ENCODE measurements at regions of chr2 and their contacts with region 1.

Region 1: DNA sequence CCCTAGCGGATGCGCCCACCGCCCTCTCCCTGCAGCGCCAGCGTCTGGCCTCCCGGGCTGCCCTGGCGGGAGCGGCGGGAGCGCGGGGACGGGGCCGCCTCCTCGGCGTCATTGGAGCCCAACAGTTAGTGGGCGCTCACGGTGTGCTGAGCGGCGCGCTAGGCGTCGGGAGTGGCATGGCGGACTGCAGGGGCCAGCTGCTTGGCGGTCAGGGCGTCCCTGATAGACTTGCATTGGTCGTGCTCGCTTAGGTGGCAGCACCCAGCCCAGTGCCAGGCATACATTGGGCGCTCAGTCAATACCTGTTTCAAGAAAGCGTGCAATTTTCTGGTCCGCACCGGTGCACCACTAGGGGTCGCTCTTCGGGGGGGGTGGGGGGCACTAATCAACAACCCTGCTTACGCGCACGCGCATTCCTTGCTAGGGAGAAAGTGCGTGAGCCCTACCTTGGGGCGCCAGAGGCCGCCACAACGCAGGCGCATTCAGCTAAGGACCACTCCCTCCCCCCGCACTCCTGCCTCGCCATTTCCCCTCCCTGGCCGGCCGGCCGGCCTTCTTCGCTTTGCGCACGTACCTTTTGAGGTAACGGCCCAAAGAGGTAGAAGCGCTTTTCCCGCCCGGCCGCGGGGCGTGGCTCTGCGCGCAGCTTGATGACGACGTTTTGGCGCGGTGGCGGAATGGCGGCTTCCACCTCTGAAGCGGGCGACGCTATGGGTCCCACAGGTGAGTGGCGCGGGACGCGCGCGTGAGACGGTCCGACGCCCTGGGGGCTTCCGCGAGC is 411 bp upstream of the MZT2A start:
- DNase-seq: peak; percentile 98
- ATAC-seq: peak; percentile 84
- H3K4me3 ChIP-seq: peak overlapping the region; percentile 90 to 98 (median 91)
- H3K27ac ChIP-seq: peak overlapping the region; percentile 83
- H3K4me1 ChIP-seq: peaks cover 50% of the 10 kb centered on the region
- H3K27me3 ChIP-seq: no peaks in the 10 kb centered on the region; a peak in 1 of 5 replicates
- CTCF ChIP-seq: peak; percentile 86
- EP300 ChIP-seq: peak in 1 of 2 experiments; percentile 36; a peak in 1 of 4 replicates
- POLR2A ChIP-seq: peak in 1 of 2 experiments; percentile 66; a peak in 3 of 4 replicates
- RAD21 ChIP-seq: peak; percentile 40

Region 2: DNA sequence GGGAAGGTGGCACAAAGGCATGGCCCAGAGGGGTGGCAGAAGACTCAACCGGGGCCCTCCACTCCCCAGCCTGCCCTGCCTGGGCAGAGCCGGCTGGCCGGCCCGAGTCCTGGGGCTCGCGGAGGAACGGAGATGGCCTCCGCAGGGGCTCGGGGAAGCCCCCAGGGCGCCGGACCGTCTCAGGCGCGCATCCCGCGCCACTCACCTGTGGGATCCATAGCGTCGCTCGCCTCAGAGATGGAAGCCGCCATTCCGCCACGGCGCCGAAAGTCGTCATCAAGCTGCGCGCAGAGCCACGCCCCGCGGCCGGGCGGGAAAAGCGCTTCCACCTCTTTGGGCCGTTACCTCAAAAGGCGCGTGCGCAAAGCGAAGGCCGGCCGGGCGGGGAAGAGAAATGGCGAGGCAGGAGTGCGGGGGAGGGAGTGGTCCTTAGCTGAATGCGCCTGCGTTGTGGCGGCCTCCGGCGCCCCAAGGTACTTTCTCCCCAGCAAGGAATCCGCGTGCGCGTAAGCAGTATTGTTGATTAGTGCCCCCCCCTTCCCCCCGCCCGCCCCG is 1311.2 kb before region 1 on chr2 and contains the start of gene SMPD4:
- CTCF ChIA-PET with region 1: no interaction called
- POLR2A ChIA-PET with region 1: interaction called, 15 read pairs
- in situ Hi-C with region 1: loop called (anchors 25 kb)
- intact Hi-C with region 1: no loop called
- DNase-seq: peak; percentile 96
- ATAC-seq: peak; percentile 73
- H3K4me3 ChIP-seq: peak within 1 kb of the TSS; percentile 97 to 99 (median 99)
- H3K27ac ChIP-seq: peak within 1 kb of the TSS; percentile 92
- H3K4me1 ChIP-seq: peaks cover 35% of the 10 kb centered on the region
- H3K27me3 ChIP-seq: peaks cover 0 to 4% of the 10 kb centered on the region in 2 experiments; a peak in 2 of 5 replicates
- CTCF ChIP-seq: no peak
- EP300 ChIP-seq: peak; percentile 23 to 50; a peak in 1 of 4 replicates
- POLR2A ChIP-seq: peak; percentile 68 to 71
- RAD21 ChIP-seq: no peak
- total RNA-seq, gene SMPD4: 70.5 and 72.5 TPM in 2 replicates

Region 3: DNA sequence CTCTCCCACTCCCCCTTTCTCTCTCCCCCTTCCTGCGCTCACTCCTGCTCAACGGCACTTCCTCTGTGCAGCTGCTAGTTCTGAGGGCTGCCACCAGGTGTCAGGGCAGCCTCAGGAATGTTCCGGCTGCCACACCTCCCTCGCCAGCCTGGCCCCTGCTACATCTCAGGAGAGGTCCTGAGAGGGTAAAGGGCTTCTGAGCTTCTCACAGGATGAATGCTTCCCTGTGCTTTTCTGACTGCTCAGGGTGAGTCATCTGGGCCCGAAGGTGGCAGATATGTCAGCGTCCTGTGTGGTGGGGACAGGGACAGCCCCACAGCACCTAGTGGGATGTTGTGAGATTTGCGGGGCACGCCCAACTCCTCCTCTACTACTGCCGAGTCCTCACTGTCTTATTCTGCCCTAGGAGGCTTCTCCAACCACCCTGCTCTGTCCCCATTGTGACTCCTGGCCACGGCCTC is 338.5 kb before region 1 on chr2:
- CTCF ChIA-PET with region 1: interaction called, 14 read pairs
- POLR2A ChIA-PET with region 1: no interaction called
- in situ Hi-C with region 1: no loop called
- intact Hi-C with region 1: loop called (anchors 10 kb)
- DNase-seq: peak; percentile 70
- ATAC-seq: peak; percentile 85
- H3K4me3 ChIP-seq: no peak overlapping the region
- H3K27ac ChIP-seq: no peak overlapping the region
- H3K4me1 ChIP-seq: peaks cover 33% of the 10 kb centered on the region
- H3K27me3 ChIP-seq: peaks cover 0 to 26% of the 10 kb centered on the region in 2 experiments; a peak in 3 of 5 replicates
- CTCF ChIP-seq: peak; percentile 99
- EP300 ChIP-seq: no peak
- POLR2A ChIP-seq: no peak
- RAD21 ChIP-seq: peak; percentile 96

Region 4: DNA sequence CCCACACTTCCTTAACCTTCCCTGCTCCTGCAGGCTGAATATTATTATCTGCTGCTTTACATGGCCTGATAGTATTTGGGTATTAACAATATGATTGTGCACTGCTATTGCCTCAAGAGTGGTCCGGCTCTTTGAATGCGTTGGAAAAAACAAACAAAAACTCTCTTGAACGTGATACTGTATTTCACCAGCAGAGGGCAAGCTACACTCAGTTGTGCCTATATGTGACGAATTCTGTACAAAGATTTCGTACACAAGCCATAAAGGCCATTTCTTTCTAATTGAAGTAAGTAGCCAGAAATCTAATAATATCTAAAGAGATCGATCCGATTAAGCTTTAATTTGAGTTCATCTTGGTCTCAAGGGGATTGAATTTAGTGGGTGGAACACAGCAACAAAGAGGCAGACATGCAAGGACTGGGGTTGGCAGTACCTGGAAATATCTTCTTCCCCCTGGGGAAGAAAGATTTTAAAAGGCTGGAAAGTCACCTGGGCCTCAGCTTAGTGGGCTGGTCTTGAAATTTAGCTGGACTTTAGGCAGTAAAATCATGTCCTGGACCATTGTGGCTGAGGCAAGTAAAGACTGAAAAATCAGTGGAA is 79.4 kb before region 1 on chr2:
- CTCF ChIA-PET with region 1: interaction called, 9 read pairs
- POLR2A ChIA-PET with region 1: no interaction called
- in situ Hi-C with region 1: no loop called
- intact Hi-C with region 1: loop called (anchors 2 kb)
- DNase-seq: peak; percentile 61
- ATAC-seq: peak; percentile 92
- H3K4me3 ChIP-seq: no peak overlapping the region
- H3K27ac ChIP-seq: no peak overlapping the region
- H3K4me1 ChIP-seq: 0 out of 2 replicates have a peak, but pooled peaks cover 8% of the 10 kb centered on the region
- H3K27me3 ChIP-seq: peaks cover 0 to 28% of the 10 kb centered on the region in 2 experiments; a peak in 3 of 5 replicates
- CTCF ChIP-seq: peak; percentile 86
- EP300 ChIP-seq: no peak
- POLR2A ChIP-seq: no peak
- RAD21 ChIP-seq: peak; percentile 76

Region 5: DNA sequence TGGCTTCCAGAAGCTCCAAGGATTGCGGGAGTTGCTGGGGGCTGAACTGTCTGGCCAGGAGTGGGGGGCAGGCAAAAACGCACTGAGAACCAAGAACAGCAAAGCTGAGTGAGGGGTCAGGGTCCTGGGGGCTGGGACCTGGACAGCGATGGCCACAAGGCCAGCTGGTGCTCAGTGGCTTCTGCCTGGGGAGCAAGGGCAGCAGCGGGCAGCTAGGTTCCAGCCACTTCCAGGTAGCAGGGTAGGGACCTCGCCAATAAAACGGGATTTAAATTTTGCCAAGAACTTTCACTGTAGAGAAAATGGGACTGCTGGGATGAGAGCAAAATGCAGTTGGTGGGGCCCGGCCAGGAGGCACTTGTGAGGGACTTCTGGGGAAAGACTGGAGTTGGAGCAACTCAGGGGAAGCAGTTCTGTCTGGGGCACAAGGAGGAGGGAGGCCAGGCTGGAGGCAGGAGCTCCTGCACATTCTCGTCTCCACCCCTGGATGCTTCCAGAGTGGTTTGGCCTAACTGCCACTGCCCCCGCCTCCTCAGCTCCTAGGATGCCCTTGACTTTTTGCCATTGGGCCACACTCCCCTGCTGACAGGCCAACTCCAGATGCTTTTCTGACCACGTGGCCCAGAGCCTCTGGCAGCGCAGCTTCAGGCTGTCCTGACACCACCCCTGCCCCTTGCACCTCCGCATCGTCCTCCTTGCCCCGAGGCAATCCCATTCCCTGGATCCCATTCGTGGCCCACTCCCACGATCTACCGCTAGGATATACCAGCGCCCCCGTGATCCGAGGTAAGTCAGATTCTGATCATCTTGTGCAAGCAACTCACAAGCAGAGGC is 29.6 kb after region 1 on chr2:
- CTCF ChIA-PET with region 1: no interaction called
- POLR2A ChIA-PET with region 1: interaction called, 3 read pairs
- in situ Hi-C with region 1: no loop called
- intact Hi-C with region 1: loop called (anchors 5 kb)
- DNase-seq: no peak
- ATAC-seq: peak; percentile 6
- H3K4me3 ChIP-seq: no peak overlapping the region
- H3K27ac ChIP-seq: peak overlapping the region; percentile 30
- H3K4me1 ChIP-seq: peaks cover 14% of the 10 kb centered on the region
- H3K27me3 ChIP-seq: no peaks in the 10 kb centered on the region
- CTCF ChIP-seq: no peak
- EP300 ChIP-seq: no peak
- POLR2A ChIP-seq: 0 out of 4 replicates have a peak, but pooled peaks of 1 of the 2 experiments have one; percentile 30
- RAD21 ChIP-seq: no peak

Region 6: GRCh38 chr2:131673392-131674173 is 181.0 kb after region 1 on chr2:
- CTCF ChIA-PET with region 1: no interaction called
- POLR2A ChIA-PET with region 1: interaction called, 4 read pairs
- in situ Hi-C with region 1: no loop called
- intact Hi-C with region 1: loop called (anchors 5 kb)
- DNase-seq: peak; percentile 71
- ATAC-seq: peak; percentile 96
- H3K4me3 ChIP-seq: peak overlapping the region; percentile 53 to 72 (median 56)
- H3K27ac ChIP-seq: no peak overlapping the region
- H3K4me1 ChIP-seq: peaks cover 20% of the 10 kb centered on the region
- H3K27me3 ChIP-seq: peaks cover 0 to 8% of the 10 kb centered on the region in 2 experiments; a peak in 2 of 5 replicates
- CTCF ChIP-seq: peak; percentile 98
- EP300 ChIP-seq: 0 out of 4 replicates have a peak, but pooled peaks of 1 of the 2 experiments have one; percentile 27
- POLR2A ChIP-seq: no peak
- RAD21 ChIP-seq: peak; percentile 95

Measured in HepG2 (cell line).